Activated naive CD4-positive, alpha-beta T cell treated with anti-CD3 and anti-CD28 coated beads for 36 hours (primary cell): ENCODE measurements at regions of chr9 and their contacts with region 1.

Region 1: GRCh38 chr9:112717661-112718341 is at the start of gene INIP:
- DNase-seq: peak; percentile 97
- H3K4me3 Mint-ChIP-seq: peak within 1 kb of the TSS; percentile 97
- H3K27ac Mint-ChIP-seq: peak within 1 kb of the TSS; percentile 94
- H3K4me1 Mint-ChIP-seq: peaks cover 23% of the 10 kb centered on the region
- H3K27me3 Mint-ChIP-seq: no peaks in the 10 kb centered on the region
- total RNA-seq, gene INIP: 31.1 to 33.4 TPM

Region 2: GRCh38 chr9:112326194-112326593 is 391.6 kb before region 1 on chr9:
- CTCF ChIA-PET with region 1: no interaction called
- intact Hi-C with region 1: no loop called
- DNase-seq: no peak
- H3K4me3 Mint-ChIP-seq: no peak overlapping the region
- H3K27ac Mint-ChIP-seq: no peak overlapping the region
- H3K4me1 Mint-ChIP-seq: peaks cover 65% of the 10 kb centered on the region
- H3K27me3 Mint-ChIP-seq: no peaks in the 10 kb centered on the region

Region 3: GRCh38 chr9:112355427-112355897 is 362.3 kb before region 1 on chr9:
- CTCF ChIA-PET with region 1: no interaction called
- intact Hi-C with region 1: loop called (anchors 5 kb)
- DNase-seq: peak; percentile 18
- H3K4me3 Mint-ChIP-seq: no peak overlapping the region
- H3K27ac Mint-ChIP-seq: peak overlapping the region; percentile 34
- H3K4me1 Mint-ChIP-seq: peaks cover 31% of the 10 kb centered on the region
- H3K27me3 Mint-ChIP-seq: no peaks in the 10 kb centered on the region

Region 4: GRCh38 chr9:112443200-112443599 is 274.6 kb before region 1 on chr9:
- CTCF ChIA-PET with region 1: interaction called, 3 read pairs
- intact Hi-C with region 1: loop called (anchors 1 kb)
- DNase-seq: peak; percentile 47
- H3K4me3 Mint-ChIP-seq: no peak overlapping the region
- H3K27ac Mint-ChIP-seq: no peak overlapping the region
- H3K4me1 Mint-ChIP-seq: no peaks in the 10 kb centered on the region
- H3K27me3 Mint-ChIP-seq: no peaks in the 10 kb centered on the region